Naive thymus-derived CD4-positive, alpha-beta T cell (primary cell): ENCODE measurements at regions of chr9 and their contacts with region 1.

Region 1: GRCh38 chr9:26462213-26462612 is 430.4 kb downstream of the CAAP1 start:
- DNase-seq: no peak
- ATAC-seq: no peak
- H3K4me3 ChIP-seq: no peak overlapping the region
- H3K4me3 Mint-ChIP-seq: no peak overlapping the region
- H3K27ac ChIP-seq: no peak overlapping the region
- H3K27ac Mint-ChIP-seq: no peak overlapping the region
- H3K4me1 ChIP-seq: no peaks in the 10 kb centered on the region
- H3K4me1 Mint-ChIP-seq: no peaks in the 10 kb centered on the region
- H3K27me3 ChIP-seq: no peaks in the 10 kb centered on the region
- H3K27me3 Mint-ChIP-seq: no peaks in the 10 kb centered on the region

Region 2: GRCh38 chr9:25418974-25419373 is 1043.2 kb before region 1 on chr9:
- CTCF ChIA-PET with region 1: interaction called, 11 read pairs
- POLR2A ChIA-PET with region 1: no interaction called
- intact Hi-C with region 1: no loop called
- DNase-seq: no peak
- ATAC-seq: no peak
- H3K4me3 ChIP-seq: no peak overlapping the region
- H3K4me3 Mint-ChIP-seq: no peak overlapping the region
- H3K27ac ChIP-seq: no peak overlapping the region
- H3K27ac Mint-ChIP-seq: no peak overlapping the region
- H3K4me1 ChIP-seq: no peaks in the 10 kb centered on the region
- H3K4me1 Mint-ChIP-seq: no peaks in the 10 kb centered on the region
- H3K27me3 ChIP-seq: no peaks in the 10 kb centered on the region
- H3K27me3 Mint-ChIP-seq: no peaks in the 10 kb centered on the region

Region 3: GRCh38 chr9:26936300-26936948 is 474.2 kb after region 1 on chr9:
- CTCF ChIA-PET with region 1: no interaction called
- POLR2A ChIA-PET with region 1: no interaction called
- intact Hi-C with region 1: no loop called
- DNase-seq: no peak
- ATAC-seq: no peak
- H3K4me3 ChIP-seq: no peak overlapping the region
- H3K4me3 Mint-ChIP-seq: peak overlapping the region in 2 of 10 donors; percentile 6 to 18
- H3K27ac ChIP-seq: no peak overlapping the region
- H3K27ac Mint-ChIP-seq: no peak overlapping the region
- H3K4me1 ChIP-seq: peaks cover 8 to 21% of the 10 kb centered on the region in 2 donors
- H3K4me1 Mint-ChIP-seq: peaks cover 36 to 59% (median 54%) of the 10 kb centered on the region in 7 donors
- H3K27me3 ChIP-seq: no peaks in the 10 kb centered on the region
- H3K27me3 Mint-ChIP-seq: no peaks in the 10 kb centered on the region

Region 4: GRCh38 chr9:27162045-27162444 is 699.8 kb after region 1 on chr9:
- CTCF ChIA-PET with region 1: no interaction called
- POLR2A ChIA-PET with region 1: no interaction called
- intact Hi-C with region 1: no loop called
- DNase-seq: no peak
- ATAC-seq: no peak
- H3K4me3 ChIP-seq: no peak overlapping the region
- H3K4me3 Mint-ChIP-seq: no peak overlapping the region
- H3K27ac ChIP-seq: no peak overlapping the region
- H3K27ac Mint-ChIP-seq: no peak overlapping the region
- H3K4me1 ChIP-seq: no peaks in the 10 kb centered on the region
- H3K4me1 Mint-ChIP-seq: no peaks in the 10 kb centered on the region
- H3K27me3 ChIP-seq: no peaks in the 10 kb centered on the region
- H3K27me3 Mint-ChIP-seq: peaks cover 0 to 17% (median 7%) of the 10 kb centered on the region in 5 donors